Ovary (tissue), 10 donors: ENCODE measurements at regions of chr22 and their contacts with region 1.

Region 1: DNA sequence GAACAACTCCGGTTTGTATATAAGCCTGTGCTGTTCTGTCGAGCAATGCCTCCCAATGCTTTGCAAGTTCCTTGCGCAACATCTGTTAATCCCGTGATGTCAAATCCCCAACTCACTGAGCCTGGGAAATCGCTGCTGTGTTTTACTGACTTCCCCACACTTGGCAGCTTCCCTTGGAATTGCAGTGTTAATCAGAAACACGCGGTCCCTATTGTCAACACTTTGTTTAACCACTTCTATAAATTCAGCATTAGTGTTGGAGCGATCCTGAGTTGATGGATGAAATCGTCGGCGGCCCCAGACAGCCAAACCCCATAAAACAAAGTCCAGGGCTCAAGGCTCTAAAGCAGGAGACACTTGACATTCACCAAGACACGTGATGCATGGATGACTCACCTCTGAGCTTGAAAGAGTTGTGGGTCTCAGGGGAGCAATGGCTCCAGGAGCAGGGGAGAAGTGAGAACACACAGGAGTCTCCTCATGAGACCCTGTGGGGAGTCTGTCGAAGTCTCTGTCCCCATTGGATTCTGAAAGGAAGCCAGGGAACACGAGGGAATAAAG is 555.3 kb downstream of the MIAT start:
- DNase-seq: peak; percentile 63 to 90 (median 76)
- H3K4me3 ChIP-seq: no peak overlapping the region
- H3K27ac ChIP-seq: peak overlapping the region; percentile 78 to 96
- H3K4me1 ChIP-seq: peaks cover 19% of the 10 kb centered on the region
- H3K27me3 ChIP-seq: no peaks in the 10 kb centered on the region
- CTCF ChIP-seq: no peak
- EP300 ChIP-seq: peak; percentile 81
- POLR2A ChIP-seq: no peak

Region 2: GRCh38 chr22:27107824-27108223 is 104.9 kb before region 1 on chr22:
- intact Hi-C with region 1: loop called in 1 of 4 experiments (anchors 5 kb)
- DNase-seq: peak; percentile 73 to 81 (median 77)
- H3K4me3 ChIP-seq: no peak overlapping the region
- H3K27ac ChIP-seq: peak overlapping the region; percentile 49 to 62
- H3K4me1 ChIP-seq: peaks cover 17% of the 10 kb centered on the region
- H3K27me3 ChIP-seq: no peaks in the 10 kb centered on the region
- CTCF ChIP-seq: no peak
- EP300 ChIP-seq: no peak
- POLR2A ChIP-seq: no peak